ENCODE measurements at regions of chr6 and their contacts with region 1.

Region 1: GRCh38 chr6:89122625-89123024 is 4.8 kb upstream of the SRSF12 start:
- DNase-seq: peak; percentile 54
- ATAC-seq: peak; percentile 65
- H3K4me3 ChIP-seq: no peak overlapping the region
- H3K27ac ChIP-seq: no peak overlapping the region
- H3K4me1 ChIP-seq: peaks cover 4% of the 10 kb centered on the region; the same call in 1 of the 2 replicates
- H3K27me3 ChIP-seq: no peaks in the 10 kb centered on the region
- CTCF ChIP-seq: peak; percentile 71

Region 2: GRCh38 chr6:88890860-88891845 is 231.5 kb before region 1 on chr6:
- CTCF ChIA-PET with region 1: no interaction called
- POLR2A ChIA-PET with region 1: no interaction called
- intact Hi-C with region 1: no loop called
- DNase-seq: peak; percentile 33
- ATAC-seq: peak; percentile 61; the same call in 1 of the 2 replicates
- H3K4me3 ChIP-seq: no peak overlapping the region
- H3K27ac ChIP-seq: no peak overlapping the region
- H3K4me1 ChIP-seq: peaks cover 8% of the 10 kb centered on the region; the same call in 1 of the 2 replicates
- H3K27me3 ChIP-seq: no peaks in the 10 kb centered on the region
- CTCF ChIP-seq: no peak

Region 3: GRCh38 chr6:89242574-89243330 is 120.1 kb after region 1 on chr6:
- CTCF ChIA-PET with region 1: interaction called, 9 read pairs
- POLR2A ChIA-PET with region 1: no interaction called
- intact Hi-C with region 1: loop called (anchors 1 kb)
- DNase-seq: peak; percentile 58
- ATAC-seq: peak; percentile 70
- H3K4me3 ChIP-seq: no peak overlapping the region
- H3K27ac ChIP-seq: no peak overlapping the region
- H3K4me1 ChIP-seq: no peaks in the 10 kb centered on the region
- H3K27me3 ChIP-seq: no peaks in the 10 kb centered on the region; the same call in 1 of the 2 replicates
- CTCF ChIP-seq: peak; percentile 59

Region 4: DNA sequence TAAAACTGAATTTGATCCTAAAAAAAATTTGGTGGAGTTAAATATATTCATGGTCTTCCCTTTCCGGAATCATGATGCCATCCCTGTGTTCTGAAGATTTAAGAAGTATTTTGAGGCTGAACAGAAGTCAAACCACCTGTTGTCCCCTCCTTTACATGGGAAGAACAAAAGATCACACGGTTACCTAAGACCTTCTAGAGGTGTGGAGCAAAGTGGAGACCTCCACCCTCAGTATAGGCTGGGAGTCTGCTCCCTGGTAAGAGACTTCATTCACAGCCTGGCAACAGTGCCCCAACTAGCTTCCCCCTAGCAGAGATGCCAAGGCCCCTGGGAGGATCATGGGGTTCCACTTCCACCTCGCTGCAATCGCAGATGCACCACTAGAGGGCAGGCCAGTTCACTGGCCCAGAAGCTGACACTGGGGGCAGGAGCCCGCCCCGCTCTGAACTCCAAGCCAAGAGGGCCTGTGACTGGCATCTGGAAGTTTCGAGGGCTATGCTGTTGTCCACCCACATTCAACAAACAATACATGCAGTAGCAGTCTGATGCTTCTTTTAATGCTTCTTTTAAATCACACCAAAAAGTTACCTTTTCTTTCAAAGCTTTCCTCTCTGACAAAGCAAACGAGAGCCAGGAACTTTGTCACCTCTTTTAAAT is 249.4 kb after region 1 on chr6:
- CTCF ChIA-PET with region 1: no interaction called
- POLR2A ChIA-PET with region 1: no interaction called
- intact Hi-C with region 1: loop called (anchors 1 kb)
- DNase-seq: peak; percentile 73
- ATAC-seq: peak; percentile 84
- H3K4me3 ChIP-seq: no peak overlapping the region
- H3K27ac ChIP-seq: no peak overlapping the region
- H3K4me1 ChIP-seq: peaks cover 5% of the 10 kb centered on the region
- H3K27me3 ChIP-seq: no peaks in the 10 kb centered on the region
- CTCF ChIP-seq: peak; percentile 86

Measured in PC-3 (cell line).